Sciatic nerve (tissue), 2 donors: ENCODE measurements at regions of chr4 and their contacts with region 1.

Region 1: GRCh38 chr4:176357359-176358082 is 37.8 kb downstream of the SPCS3 start:
- DNase-seq: no peak
- ATAC-seq: no peak

Region 2: DNA sequence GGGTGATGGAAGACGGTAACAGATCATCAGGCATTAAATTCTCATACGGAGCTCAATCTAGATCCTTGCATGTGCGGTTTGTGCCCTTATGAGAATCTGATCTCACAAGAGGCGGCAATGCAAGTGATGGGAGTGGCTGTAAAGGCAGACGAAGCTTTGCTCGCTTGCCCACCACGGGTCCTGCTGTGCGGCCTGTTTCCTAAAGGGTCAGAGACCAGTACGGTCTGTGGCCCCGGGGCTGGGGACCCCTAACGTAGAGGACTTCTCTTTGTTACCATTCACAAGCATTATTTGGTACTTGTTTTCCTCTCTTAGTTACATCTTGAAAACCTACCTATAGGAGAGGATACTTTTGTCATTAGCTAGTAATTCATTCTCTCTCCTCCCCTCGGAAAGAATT is 1218.3 kb before region 1 on chr4:
- intact Hi-C with region 1: loop called (anchors 10 kb)
- DNase-seq: no peak
- ATAC-seq: no peak

Region 3: GRCh38 chr4:176343256-176343655 is 14.3 kb before region 1 on chr4:
- intact Hi-C with region 1: no loop called
- DNase-seq: no peak
- ATAC-seq: no peak